Adrenal gland (tissue), 19 donors: ENCODE measurements at regions of chr11 and their contacts with region 1.

Region 1: DNA sequence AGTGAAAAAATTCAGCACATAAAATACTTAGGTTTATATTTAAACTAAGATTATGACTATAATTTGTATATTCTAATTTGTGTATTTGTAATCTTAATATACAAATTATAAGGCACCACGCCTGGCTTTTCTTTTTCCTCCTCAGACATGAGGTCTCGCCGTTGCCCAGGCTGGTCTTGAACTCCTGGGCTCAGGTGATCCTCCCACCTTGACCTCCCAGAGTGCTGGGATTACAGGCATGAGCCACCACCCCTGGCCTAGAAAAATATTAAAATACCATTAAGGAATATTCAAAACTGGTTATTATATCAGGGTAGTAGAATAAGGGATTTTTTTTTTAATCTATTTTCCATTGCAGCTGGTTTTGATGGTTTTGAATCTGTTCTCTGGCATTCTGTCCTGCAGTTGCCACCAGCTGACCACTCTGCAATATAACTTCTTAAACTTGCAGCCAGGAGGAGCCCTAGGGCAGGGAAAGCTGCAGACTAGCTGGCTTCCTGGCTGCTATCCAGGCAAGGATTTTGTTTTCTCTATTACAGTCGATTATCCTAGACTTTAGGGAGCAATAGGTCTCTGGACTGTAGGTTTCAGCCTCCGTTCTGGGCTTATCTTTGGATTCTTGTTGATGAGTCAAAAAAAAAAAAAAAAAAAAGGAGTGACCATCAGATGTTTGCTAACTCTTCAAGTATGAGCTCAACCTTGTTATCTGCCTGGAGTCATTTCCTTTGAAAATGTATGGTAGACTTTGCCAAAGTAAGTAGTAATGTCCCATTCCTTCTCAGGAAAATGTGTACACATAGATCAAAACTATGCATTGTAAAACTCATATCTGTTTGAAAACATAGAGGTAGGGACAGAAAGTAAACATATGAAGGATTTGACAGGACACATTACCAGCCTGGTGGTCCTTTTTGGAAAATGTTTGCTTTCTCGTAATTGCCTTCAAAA is 13.2 kb downstream of the POLA2 start:
- DNase-seq: peak; percentile 83 to 92 (median 88)
- H3K4me3 ChIP-seq: no peak overlapping the region
- H3K27ac ChIP-seq: peak overlapping the region in 2 of 5 donors; percentile 56 to 67
- H3K4me1 ChIP-seq: peaks cover 15 to 23% of the 10 kb centered on the region in 2 donors
- H3K27me3 ChIP-seq: no peaks in the 10 kb centered on the region
- CTCF ChIP-seq: peak; percentile 50 to 98 (median 92)
- POLR2A ChIP-seq: no peak

Region 2: GRCh38 chr11:65180877-65181568 is 94.0 kb before region 1 on chr11:
- intact Hi-C with region 1: no loop called
- DNase-seq: peak; percentile 56 to 72 (median 67)
- H3K4me3 ChIP-seq: peak overlapping the region; percentile 5 to 100 (median 57)
- H3K27ac ChIP-seq: peak overlapping the region in 4 of 5 donors; percentile 58 to 96 (median 81)
- H3K4me1 ChIP-seq: peaks cover 12 to 22% of the 10 kb centered on the region in 2 donors
- H3K27me3 ChIP-seq: no peaks in the 10 kb centered on the region
- CTCF ChIP-seq: peak in 5 of 6 experiments; percentile 30 to 58 (median 49)
- POLR2A ChIP-seq: peak; percentile 23 to 49

Region 3: DNA sequence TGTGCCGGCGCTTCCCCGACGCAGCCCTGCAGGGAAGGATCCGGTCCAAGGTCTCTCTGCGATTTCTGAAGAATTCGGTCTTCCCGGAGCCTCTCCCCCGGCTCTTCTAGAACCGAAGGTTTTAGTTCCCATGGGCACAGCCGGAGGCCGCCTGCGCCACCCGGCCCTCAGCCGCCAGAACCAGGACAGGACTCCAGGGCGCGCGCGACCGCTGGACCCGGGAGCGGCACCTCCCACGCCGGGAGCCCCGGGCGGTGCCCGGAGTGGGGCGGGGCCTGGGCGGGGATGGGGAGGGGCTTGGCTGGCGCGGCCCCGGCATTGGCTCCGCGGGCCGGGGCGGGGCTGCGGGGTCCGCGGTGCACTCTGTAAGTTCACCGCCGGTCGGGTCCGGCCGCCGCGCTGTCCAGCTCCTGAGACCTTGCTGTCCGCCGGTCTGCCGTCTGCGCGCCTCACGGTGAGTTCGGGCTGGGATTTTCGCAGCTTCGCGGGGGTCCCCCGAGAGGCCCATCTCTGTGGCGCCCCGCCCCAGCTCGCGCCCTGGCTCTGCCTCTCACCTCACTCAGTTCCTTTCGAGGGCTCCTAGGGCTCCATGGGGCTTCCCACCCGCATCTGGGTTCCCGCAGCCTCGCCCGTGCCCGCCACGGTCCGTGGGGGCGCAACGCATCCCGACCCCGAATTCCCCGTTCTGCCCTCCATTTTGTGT is 39.6 kb after region 1 on chr11 and contains the start of gene CDC42EP2:
- intact Hi-C with region 1: loop called (anchors 2 kb)
- DNase-seq: peak; percentile 84 to 92 (median 87)
- H3K4me3 ChIP-seq: peak within 1 kb of the TSS in 3 of 4 donors; percentile 57 to 78 (median 77)
- H3K27ac ChIP-seq: peak within 1 kb of the TSS in 4 of 5 donors; percentile 29 to 93 (median 75)
- H3K4me1 ChIP-seq: peaks cover 13 to 26% of the 10 kb centered on the region in 2 donors
- H3K27me3 ChIP-seq: no peaks in the 10 kb centered on the region
- CTCF ChIP-seq: peak in 1 of 6 experiments; percentile 19
- POLR2A ChIP-seq: peak in 1 of 2 donors; percentile 56
- total RNA-seq, gene CDC42EP2: 1.1 to 18.3 (median 4.8) TPM

Region 4: DNA sequence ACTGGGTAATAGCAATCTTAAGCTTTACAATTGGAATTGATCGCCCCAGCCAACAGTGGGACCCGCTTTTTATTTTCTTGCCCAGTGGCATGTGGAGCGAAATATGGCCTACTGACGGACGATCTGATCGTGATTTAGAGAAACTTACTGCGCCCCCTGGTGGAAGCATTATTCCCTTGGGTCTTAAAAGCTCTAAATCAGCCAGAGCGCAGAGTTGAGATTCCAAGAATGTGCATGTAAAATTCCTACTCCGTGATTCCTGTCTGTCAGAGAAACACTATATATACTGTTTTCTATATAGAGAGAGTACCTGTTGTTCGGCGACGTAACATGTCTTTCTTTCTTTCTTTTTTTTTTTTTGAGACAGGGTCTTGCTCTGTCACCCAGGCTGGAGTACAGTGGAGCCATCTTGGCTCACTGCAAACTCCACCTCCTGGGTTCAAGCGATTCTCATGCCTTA is 55.0 kb after region 1 on chr11:
- intact Hi-C with region 1: loop called in 1 of 2 experiments (anchors 2 kb)
- DNase-seq: peak; percentile 83 to 97 (median 91)
- H3K4me3 ChIP-seq: no peak overlapping the region
- H3K27ac ChIP-seq: peak overlapping the region in 2 of 5 donors; percentile 7 to 32
- H3K4me1 ChIP-seq: peaks cover 7% of the 10 kb centered on the region in 2 donors
- H3K27me3 ChIP-seq: no peaks in the 10 kb centered on the region
- CTCF ChIP-seq: peak; percentile 70 to 86 (median 82)
- POLR2A ChIP-seq: no peak